Activated CD8-positive, alpha-beta memory T cell treated with anti-CD3 and anti-CD28 coated beads, Interleukin-2, amount 10 ng/mL, durations not matched to agents 7 days and 5 days (primary cell): ENCODE measurements at regions of chr1 and their contacts with region 1.

Region 1: DNA sequence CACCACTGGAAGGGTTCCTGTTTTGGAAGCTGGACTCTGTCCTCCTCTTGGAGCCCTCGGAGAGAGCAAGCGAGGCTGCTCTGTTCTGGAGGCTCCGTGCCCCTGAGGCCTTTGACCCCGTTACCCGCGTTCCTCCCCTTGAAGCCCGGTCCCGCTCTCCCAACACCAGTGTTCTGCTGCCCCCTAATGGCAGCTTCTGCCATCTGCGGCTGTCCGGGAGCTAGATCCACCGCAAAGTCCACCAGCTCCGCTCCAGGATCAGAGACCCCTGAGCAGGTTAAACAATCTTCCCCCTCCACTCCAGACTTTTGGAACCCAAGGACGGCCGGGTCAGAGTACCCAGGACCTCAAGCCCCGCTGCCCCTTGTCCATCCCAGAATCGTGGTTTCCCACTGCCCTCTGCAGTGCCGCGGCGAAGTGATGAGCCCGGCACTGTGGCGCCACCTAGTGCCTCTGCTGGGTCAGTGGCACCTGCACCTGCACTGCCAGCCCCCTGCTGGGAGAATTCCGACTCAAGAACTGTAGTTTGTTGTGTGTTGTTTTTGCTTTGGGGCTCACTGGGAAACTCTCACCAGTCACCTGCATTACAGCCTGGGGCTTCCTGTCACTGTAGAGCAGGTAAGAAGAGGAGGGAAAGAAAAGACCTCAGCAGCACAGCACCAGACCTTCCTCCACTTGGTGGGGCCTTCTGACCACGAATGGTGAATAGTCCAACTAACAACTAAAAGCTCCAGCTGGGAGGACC is 63.5 kb upstream of the NFASC start:
- DNase-seq: peak; percentile 91
- ATAC-seq: peak; percentile 95
- H3K4me3 Mint-ChIP-seq: peak overlapping the region; percentile 84
- H3K27ac Mint-ChIP-seq: peak overlapping the region; percentile 79
- H3K4me1 Mint-ChIP-seq: peaks cover 19% of the 10 kb centered on the region
- H3K27me3 Mint-ChIP-seq: peaks cover 6% of the 10 kb centered on the region

Region 2: DNA sequence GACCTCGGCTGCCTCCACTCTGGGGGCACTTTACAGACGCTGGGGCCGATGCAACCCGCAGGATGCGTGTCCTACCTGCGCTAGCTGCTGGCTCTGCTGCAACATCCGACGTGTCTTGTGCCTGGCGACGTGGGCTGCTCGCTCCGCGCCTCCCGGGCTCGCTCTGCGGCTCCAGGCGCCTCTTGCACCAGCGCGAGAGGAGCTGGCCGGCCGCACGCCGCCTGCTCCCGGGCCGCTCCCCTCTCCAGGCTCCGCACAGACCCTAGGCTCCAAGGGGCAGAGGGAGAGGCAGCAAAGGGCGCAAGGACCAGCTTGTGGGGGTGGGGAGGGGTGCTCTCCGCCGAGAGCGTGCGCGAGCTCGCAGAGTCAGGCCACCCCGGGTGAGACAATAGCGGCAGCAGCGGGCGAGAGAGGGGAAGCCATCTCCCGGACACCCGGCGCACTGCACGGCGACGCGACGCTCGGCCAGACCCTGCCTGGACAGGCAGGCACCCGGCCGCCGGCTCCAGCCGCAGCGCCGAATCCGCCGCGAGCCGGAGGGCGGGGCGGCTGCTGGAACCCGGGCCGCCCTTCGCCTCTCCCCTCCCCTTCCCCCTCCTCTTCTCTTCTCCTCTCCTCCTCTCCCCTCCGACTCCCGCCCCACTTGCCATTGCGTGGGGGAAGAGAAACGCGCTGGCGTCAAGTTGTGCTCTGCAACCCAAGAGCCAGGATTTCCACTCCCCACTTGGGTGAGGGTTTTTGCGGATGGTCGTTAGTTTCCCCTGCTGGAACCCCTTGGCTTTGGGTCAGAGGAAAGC is 312.6 kb before region 1 on chr1 and contains the start of gene PIK3C2B:
- CTCF ChIA-PET with region 1: interaction called, 13 read pairs
- DNase-seq: peak; percentile 84
- ATAC-seq: peak; percentile 89
- H3K4me3 Mint-ChIP-seq: peak within 1 kb of the TSS; percentile 77
- H3K27ac Mint-ChIP-seq: peak within 1 kb of the TSS; percentile 86
- H3K4me1 Mint-ChIP-seq: peaks cover 44% of the 10 kb centered on the region
- H3K27me3 Mint-ChIP-seq: no peaks in the 10 kb centered on the region
- total RNA-seq, gene PIK3C2B: 21.6 to 26.0 TPM

Region 3: GRCh38 chr1:204544321-204544720 is 262.8 kb before region 1 on chr1:
- CTCF ChIA-PET with region 1: interaction called, 10 read pairs
- DNase-seq: no peak
- ATAC-seq: peak; percentile 96
- H3K4me3 Mint-ChIP-seq: peak overlapping the region; percentile 16
- H3K27ac Mint-ChIP-seq: peak overlapping the region; percentile 81
- H3K4me1 Mint-ChIP-seq: peaks cover 46% of the 10 kb centered on the region
- H3K27me3 Mint-ChIP-seq: no peaks in the 10 kb centered on the region

Region 4: DNA sequence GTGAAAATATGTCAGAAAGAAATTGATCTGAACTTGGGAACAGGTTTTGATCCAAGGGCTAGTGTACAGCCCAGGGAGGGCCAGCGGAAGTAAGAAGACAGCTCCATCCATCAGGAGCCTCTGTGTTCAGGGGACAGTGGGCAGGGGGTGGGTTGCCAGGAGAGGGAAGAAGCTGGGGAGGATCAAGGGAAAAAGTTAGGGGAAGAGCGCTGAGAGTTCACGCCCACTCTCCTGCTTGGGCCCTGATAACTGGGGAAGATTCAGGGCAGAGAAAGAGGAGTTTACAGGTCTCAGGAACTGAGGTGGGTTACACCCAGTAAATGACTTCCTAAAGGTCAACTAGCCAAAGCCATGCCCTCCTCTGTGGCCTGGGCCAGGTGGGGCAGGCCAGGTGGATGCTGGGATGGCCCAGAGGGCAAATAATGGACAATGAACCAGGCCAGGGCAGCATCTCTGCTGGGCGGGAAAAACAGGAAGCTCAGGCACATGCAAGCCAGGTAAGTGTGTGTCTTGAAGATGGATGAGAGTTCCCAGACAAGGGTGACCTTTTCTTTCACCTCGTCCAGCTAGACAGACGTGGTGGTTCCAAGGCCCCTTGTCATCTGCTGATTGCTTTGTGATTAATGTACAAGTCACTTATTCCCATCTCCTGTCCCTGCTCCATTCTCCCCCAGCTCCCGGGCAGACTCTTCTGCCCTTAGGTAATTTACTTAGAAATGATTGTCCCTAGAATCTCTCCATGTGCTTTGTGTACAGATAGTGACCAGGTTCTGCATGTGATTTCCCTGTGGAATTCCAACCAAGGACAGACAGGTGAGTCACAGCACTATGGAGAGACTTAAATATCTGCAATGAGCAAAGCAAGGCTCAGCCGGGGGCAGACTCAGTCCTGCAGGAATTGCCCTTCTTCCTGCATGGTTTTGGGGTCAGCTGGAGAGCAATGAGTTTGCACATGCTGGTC is 233.9 kb before region 1 on chr1:
- CTCF ChIA-PET with region 1: interaction called, 121 read pairs
- DNase-seq: no peak
- ATAC-seq: no peak
- H3K4me3 Mint-ChIP-seq: no peak overlapping the region
- H3K27ac Mint-ChIP-seq: no peak overlapping the region
- H3K4me1 Mint-ChIP-seq: peaks cover 3% of the 10 kb centered on the region
- H3K27me3 Mint-ChIP-seq: no peaks in the 10 kb centered on the region

Region 5: DNA sequence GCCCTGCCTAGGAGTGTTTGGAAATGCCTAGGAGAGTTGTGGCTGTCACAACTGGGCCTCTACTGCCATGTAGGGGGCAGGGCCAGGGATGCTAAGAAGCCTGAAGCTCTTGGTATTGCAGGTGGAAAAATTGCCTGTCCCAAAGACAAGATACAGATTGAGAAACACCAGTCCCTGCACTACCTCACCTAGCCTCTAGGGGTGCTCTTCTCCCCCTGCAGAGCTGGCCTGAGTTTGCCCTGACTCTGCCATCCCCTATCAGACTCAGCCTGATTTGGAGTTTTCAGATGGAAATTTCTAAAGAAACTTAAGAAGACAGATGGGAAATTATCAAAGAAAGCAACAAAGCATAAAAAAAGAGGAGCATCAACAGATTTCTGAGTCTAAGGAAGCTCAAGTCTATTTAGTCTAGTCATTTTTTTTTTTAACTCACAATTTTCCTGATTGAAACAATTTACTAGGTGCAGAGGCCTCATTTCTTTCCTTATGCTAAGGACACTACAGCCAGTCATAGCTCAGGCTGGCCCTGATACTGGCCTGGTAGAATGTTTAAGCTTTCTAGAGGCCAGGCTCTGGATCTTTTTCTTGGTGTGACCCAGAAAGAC is 60.2 kb before region 1 on chr1:
- CTCF ChIA-PET with region 1: interaction called, 33 read pairs
- DNase-seq: peak; percentile 56
- ATAC-seq: peak; percentile 78
- H3K4me3 Mint-ChIP-seq: no peak overlapping the region
- H3K27ac Mint-ChIP-seq: no peak overlapping the region
- H3K4me1 Mint-ChIP-seq: no peaks in the 10 kb centered on the region
- H3K27me3 Mint-ChIP-seq: peaks cover 32% of the 10 kb centered on the region

Region 6: DNA sequence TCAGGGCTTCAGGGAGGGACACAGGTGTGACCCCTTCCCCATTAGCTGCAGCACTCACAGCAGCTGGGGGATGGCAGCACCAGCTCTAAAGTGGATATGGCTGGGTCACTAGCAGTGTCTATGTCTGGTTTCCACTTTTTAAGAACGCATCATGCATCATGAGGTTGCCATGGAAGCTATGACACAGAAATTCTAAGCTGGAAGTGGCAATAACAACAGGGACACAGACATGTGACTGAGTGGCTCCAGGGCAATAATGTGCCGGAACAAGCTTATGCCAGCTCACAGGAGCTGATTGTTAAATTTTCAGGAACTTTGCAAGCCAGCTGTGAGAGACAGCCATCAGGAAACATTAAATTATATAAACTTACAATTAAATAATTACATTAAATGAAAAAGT is 12.4 kb after region 1 on chr1:
- CTCF ChIA-PET with region 1: interaction called, 35 read pairs
- DNase-seq: no peak
- ATAC-seq: no peak
- H3K4me3 Mint-ChIP-seq: no peak overlapping the region
- H3K27ac Mint-ChIP-seq: no peak overlapping the region
- H3K4me1 Mint-ChIP-seq: no peaks in the 10 kb centered on the region
- H3K27me3 Mint-ChIP-seq: peaks cover 38% of the 10 kb centered on the region